ENCODE measurements at regions of chr19 and their contacts with region 1.

Region 1: GRCh38 chr19:29988351-29988750 is 46.3 kb downstream of the URI1 start:
- DNase-seq: no peak
- H3K4me3 ChIP-seq: no peak overlapping the region
- CTCF ChIP-seq: no peak

Region 2: DNA sequence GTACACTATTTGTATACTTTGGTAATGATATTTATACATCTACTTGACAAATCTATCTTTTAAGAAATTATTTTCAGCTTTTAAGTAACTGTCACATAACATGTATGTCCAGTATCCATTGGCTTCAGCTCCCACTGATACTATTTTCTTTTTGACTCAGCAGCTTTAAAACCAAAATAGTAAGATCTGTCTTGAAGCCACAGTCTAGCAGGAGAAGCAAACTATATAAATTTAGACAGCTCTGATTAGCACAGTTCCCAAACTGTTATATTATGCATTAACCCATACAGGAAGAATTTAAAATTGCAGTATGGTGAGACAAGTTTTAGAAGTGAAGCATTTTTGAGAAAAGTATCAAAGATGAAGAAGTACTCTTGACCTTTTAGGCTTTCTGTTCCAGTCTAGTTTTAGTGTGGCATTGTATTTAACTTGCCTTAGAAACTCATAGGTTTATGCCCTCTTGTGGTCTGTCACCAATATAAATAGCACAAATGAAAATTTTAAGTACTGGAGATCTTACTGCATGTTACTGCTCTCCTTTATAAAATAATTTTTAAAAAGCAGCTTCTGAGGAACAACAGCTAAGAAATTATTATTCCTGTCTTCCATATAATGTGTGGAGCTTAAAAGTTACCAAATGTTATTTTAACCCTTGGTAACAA is 21.6 kb before region 1 on chr19:
- CTCF ChIA-PET with region 1: interaction called, 14 read pairs
- POLR2A ChIA-PET with region 1: no interaction called
- DNase-seq: no peak
- H3K4me3 ChIP-seq: no peak overlapping the region
- CTCF ChIP-seq: peak; percentile 7

Region 3: DNA sequence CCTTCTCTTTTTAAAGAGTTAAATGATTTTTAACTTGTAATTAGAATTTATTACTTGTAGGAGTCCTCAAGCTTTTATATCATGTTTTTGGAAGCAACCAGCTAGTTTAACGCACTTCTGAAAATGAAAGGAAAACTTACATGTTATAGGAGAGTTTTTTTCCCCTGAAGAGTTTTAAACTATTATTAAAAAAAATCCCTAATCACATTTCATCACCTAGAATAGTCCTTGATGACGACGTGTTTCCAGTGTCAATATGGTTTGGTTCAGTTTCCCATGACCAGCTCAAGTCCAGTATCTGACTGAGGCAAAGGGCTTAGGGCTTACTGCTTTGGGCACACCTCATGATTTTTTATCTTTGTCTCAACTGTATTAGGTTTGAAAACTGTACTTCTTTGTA is 10.3 kb before region 1 on chr19:
- CTCF ChIA-PET with region 1: no interaction called
- POLR2A ChIA-PET with region 1: no interaction called
- DNase-seq: no peak
- H3K4me3 ChIP-seq: no peak overlapping the region
- CTCF ChIP-seq: no peak

Region 4: DNA sequence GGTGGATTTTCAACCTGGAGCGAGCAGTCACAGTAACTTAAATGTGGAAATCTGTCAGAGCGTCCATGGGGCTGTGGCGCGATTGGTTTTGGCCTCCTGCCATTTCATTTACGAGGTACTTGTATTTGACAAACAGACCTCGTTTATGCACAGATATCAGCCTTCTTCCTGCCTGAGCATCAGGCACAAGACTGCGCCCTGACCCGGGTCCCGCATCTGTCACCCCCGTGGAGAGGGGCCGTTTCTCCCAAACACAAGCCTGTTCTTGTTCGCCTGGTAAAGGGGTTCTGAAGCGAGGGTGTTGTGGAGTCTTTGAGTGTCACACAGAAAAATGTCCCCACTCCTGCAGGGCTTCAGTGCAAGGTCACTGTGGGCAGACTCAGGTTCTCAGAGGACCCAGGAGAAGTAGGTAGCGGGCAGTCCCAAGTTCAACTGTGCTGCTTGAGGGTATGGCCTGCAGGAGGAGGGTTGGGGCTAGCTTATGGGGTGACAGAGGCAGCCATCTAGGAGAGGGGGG is 155.9 kb after region 1 on chr19:
- CTCF ChIA-PET with region 1: no interaction called
- POLR2A ChIA-PET with region 1: no interaction called
- DNase-seq: no peak
- H3K4me3 ChIP-seq: no peak overlapping the region
- CTCF ChIP-seq: no peak

Region 5: DNA sequence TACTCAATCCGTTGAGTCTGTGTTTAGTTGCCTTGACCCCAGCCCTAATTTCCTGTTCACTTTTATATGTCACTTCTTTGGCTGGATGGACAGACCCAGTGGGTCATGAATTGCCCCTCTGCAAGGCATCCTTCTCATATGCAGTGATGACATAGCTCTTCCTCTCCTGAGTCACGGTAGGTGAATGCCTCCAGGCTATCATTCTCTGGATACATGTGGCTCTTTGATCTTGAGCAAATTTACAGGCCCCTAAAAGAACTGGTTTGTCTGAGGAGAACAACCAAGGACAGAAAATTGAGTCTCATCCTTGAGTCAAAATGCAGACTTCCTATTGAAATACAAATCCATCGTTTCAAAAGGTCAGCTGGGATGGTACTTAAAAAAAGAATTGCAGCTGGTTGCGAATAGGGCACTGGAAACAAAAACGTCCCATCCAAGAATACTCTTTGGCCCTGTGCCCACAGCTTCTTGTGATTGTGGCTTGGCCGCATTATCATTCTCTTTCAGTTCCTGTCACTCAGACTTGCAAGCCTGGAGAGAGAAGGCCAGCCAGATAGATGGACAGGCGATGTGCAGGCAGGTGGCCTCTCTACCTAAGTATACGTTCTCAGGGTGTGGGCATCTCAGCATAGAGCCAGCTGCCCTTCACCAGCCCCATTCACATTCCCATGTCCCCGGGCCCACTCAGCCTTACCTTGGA is 175.2 kb after region 1 on chr19:
- CTCF ChIA-PET with region 1: no interaction called
- POLR2A ChIA-PET with region 1: no interaction called
- DNase-seq: no peak
- H3K4me3 ChIP-seq: no peak overlapping the region
- CTCF ChIP-seq: no peak

Measured in AG04449 (cell line).